ENCODE measurements at regions of chr15 and their contacts with region 1.

Region 1: GRCh38 chr15:32818758-32819447 is 101.1 kb downstream of the GREM1 start:
- DNase-seq: peak; percentile 89
- H3K4me3 ChIP-seq: peak overlapping the region; percentile 16; the same call in 1 of the 2 replicates
- CTCF ChIP-seq: no peak

Region 2: DNA sequence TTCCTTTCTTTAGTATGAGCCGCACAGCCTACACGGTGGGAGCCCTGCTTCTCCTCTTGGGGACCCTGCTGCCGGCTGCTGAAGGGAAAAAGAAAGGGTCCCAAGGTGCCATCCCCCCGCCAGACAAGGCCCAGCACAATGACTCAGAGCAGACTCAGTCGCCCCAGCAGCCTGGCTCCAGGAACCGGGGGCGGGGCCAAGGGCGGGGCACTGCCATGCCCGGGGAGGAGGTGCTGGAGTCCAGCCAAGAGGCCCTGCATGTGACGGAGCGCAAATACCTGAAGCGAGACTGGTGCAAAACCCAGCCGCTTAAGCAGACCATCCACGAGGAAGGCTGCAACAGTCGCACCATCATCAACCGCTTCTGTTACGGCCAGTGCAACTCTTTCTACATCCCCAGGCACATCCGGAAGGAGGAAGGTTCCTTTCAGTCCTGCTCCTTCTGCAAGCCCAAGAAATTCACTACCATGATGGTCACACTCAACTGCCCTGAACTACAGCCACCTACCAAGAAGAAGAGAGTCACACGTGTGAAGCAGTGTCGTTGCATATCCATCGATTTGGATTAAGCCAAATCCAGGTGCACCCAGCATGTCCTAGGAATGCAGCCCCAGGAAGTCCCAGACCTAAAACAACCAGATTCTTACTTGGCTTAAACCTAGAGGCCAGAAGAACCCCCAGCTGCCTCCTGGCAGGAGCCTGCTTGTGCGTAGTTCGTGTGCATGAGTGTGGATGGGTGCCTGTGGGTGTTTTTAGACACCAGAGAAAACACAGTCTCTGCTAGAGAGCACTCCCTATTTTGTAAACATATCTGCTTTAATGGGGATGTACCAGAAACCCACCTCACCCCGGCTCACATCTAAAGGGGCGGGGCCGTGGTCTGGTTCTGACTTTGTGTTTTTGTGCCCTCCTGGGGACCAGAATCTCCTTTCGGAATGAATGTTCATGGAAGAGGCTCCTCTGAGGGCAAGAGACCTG is 87.9 kb before region 1 on chr15:
- CTCF ChIA-PET with region 1: no interaction called
- POLR2A ChIA-PET with region 1: no interaction called
- DNase-seq: no peak
- H3K4me3 ChIP-seq: no peak overlapping the region; the same call in 1 of the 2 replicates
- CTCF ChIP-seq: no peak

Region 3: DNA sequence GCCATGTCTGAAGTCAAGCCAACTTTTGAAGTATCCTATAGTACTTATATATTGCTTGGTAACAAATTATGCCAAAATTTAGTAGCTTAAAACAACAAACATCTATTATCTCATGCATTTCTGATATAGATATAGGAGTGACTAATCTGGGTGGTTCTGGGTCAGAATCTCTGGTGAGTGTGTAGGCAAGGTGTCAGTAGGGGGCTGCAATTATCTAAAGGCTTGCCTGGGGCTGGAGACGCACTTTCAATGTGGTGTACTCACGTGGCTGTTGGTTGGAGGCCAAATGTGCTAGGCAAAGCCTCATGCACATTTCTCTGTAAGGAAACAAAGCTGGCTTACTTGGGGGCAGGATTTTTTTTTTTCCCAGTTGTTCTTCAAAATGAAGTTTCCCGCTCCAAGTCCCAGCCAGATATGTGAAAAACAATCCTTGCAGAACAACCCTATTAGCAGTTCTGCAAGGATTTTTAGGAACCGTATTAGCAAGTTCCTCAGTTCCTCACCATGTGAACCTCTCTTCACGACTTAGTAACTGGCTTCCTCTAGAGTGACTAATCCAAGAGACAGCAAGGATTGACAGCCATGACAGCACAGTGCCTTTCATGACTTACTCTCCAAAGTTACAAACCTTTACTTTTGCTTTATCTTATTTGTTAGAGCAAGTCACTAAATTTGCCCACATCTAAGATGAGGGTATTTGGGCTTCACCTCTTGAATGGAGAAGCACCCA is 75.3 kb before region 1 on chr15:
- CTCF ChIA-PET with region 1: interaction called, 3 read pairs
- POLR2A ChIA-PET with region 1: interaction called, 12 read pairs
- DNase-seq: no peak
- H3K4me3 ChIP-seq: no peak overlapping the region
- CTCF ChIP-seq: no peak

Region 4: GRCh38 chr15:33007303-33007855 is 188.5 kb after region 1 on chr15:
- CTCF ChIA-PET with region 1: no interaction called
- POLR2A ChIA-PET with region 1: no interaction called
- DNase-seq: no peak
- H3K4me3 ChIP-seq: no peak overlapping the region
- CTCF ChIP-seq: peak; percentile 13

Measured in AG04449 (cell line).